ENCODE measurements at regions of chr1 and their contacts with region 1.

Region 1: GRCh38 chr1:152440635-152441471 is 26.8 kb upstream of the CRNN start:
- DNase-seq: peak; percentile 81
- ATAC-seq: peak; percentile 99
- H3K4me3 Mint-ChIP-seq: no peak overlapping the region
- H3K27ac Mint-ChIP-seq: no peak overlapping the region
- H3K4me1 Mint-ChIP-seq: no peaks in the 10 kb centered on the region
- H3K27me3 Mint-ChIP-seq: peaks cover 19% of the 10 kb centered on the region

Region 2: DNA sequence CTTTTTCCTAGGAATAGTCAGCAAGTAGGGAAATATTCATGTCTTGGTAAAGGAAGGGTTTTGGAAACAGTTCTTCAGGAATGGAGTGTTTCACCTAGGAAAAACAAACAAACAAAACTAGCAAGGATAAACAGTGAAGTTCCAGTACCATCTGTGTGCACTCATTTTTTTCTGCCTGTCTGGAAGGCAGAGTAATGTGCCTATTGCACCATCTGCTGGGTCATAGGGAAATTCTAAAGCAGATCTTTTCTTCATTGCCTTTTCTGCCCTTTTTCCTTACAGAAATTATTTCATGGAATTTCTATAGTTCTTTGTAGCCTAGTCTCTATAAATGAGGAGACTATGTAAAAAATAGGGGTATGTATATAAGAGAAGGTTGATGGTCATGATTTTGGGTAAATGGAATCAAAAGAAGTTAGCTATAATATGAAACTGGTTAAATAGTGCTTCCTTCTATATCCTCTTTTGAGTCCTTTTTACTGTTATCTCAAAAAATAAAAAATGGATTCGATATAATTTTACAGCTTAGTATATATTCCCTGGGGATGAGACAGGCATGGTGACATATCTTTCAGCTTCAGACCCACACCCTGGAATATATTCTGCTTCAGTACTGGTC is 213.4 kb before region 1 on chr1:
- CTCF ChIA-PET with region 1: no interaction called
- POLR2A ChIA-PET with region 1: no interaction called
- intact Hi-C with region 1: no loop called
- DNase-seq: no peak
- ATAC-seq: no peak
- H3K4me3 Mint-ChIP-seq: no peak overlapping the region
- H3K27ac Mint-ChIP-seq: no peak overlapping the region
- H3K4me1 Mint-ChIP-seq: no peaks in the 10 kb centered on the region
- H3K27me3 Mint-ChIP-seq: peaks cover 15% of the 10 kb centered on the region

Region 3: DNA sequence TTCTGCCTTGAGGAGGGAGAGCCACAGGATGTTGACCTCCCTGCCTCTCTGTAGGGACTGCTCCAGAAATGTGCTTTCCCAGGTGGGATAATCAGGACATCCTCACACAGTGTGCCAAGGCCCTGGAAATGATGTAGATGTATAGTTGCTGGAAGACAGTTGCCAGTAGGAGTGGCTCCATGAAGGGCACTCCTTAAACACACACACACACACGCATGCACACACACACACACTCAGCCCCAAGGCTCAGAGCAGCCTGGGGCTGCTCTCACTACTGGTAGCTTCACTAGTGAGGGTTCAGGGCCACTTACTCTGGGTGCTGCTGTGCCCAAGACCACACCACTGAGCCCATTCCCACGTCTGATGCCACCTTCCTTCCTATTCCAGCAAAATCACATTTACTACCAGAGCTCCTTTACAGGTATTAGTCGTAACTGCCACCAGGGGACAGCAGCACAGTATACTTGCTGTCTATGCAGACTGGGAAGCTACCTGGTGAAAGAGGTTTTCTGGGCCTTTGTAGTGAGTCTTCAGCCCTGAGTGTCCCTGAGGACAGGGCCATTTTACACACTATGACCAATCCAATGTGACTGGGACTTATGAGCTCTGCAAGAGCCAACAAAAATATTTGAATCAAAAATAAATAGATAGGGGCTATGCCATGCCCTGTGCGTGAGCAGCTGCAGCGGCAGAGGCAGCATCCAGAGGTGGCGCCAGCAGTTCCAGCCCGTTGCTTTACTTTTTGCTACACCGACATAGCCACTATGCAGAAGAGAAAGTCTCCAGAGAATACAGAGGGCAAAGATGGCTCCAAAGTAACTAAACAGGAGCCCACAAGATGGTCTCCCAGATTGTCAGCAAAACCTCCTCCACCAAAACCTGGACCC is 41.8 kb before region 1 on chr1:
- CTCF ChIA-PET with region 1: interaction called, 7 read pairs
- POLR2A ChIA-PET with region 1: no interaction called
- intact Hi-C with region 1: loop called in 1 of 2 experiments (anchors 2 kb)
- DNase-seq: peak; percentile 30
- ATAC-seq: no peak
- H3K4me3 Mint-ChIP-seq: no peak overlapping the region
- H3K27ac Mint-ChIP-seq: no peak overlapping the region
- H3K4me1 Mint-ChIP-seq: peaks cover 8% of the 10 kb centered on the region
- H3K27me3 Mint-ChIP-seq: peaks cover 8% of the 10 kb centered on the region

Region 4: GRCh38 chr1:152495066-152495675 is 54.3 kb after region 1 on chr1:
- CTCF ChIA-PET with region 1: no interaction called
- POLR2A ChIA-PET with region 1: no interaction called
- intact Hi-C with region 1: no loop called
- DNase-seq: peak; percentile 71
- ATAC-seq: peak; percentile 53
- H3K4me3 Mint-ChIP-seq: no peak overlapping the region
- H3K27ac Mint-ChIP-seq: no peak overlapping the region
- H3K4me1 Mint-ChIP-seq: no peaks in the 10 kb centered on the region
- H3K27me3 Mint-ChIP-seq: peaks cover 10% of the 10 kb centered on the region

Measured in activated CD4-positive, alpha-beta T cell treated with anti-CD3 and anti-CD28 coated beads for 36 hours (primary cell).